ENCODE measurements at regions of chr12 and their contacts with region 1.

Region 1: DNA sequence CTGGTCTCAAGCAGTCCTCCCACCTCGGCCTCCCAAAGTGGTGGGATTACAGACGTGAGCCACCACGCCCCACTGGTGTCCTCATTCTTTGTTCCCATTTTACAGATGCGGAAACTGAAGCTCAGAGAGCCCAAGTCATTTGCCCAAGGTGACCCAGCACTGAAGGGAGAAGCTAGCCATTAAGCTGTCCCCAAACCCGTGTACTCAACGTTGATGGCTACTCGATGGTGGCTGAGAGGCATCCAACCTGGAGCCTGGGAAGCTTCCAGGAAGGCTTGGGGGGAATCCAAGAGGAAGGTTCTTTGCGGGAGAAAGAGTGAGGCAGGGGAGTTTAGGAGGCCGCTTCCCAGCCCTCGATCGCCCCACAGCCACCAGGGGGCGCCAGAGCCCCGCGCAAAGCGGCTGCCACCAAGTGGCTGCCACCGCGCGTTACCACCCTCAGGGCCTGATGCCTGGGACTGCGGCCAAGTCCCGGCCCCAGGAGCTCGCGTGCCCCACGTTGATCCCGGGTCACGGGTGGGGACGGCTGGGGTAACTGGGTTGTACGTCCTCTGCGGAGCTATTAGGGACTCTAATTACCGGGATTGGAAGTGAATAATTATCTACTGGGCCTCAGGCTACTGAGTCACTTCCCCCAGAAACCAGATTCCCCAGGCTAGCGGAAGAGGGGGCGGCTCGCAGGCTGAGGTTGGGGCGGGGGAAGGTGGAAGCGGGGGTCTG is 8.8 kb upstream of the SH2B3 start:
- DNase-seq: peak; percentile 96
- H3K4me3 ChIP-seq: no peak overlapping the region
- H3K27ac ChIP-seq: peak overlapping the region; percentile 81
- H3K4me1 ChIP-seq: peaks cover 27% of the 10 kb centered on the region
- H3K27me3 ChIP-seq: no peaks in the 10 kb centered on the region
- CTCF ChIP-seq: peak; percentile 99 to 100
- POLR2A ChIP-seq: peak; percentile 57

Region 2: GRCh38 chr12:111074559-111074958 is 322.3 kb before region 1 on chr12:
- CTCF ChIA-PET with region 1: no interaction called
- POLR2A ChIA-PET with region 1: no interaction called
- dilution Hi-C with region 1: no loop called
- intact Hi-C with region 1: no loop called
- DNase-seq: no peak
- H3K4me3 ChIP-seq: no peak overlapping the region
- H3K27ac ChIP-seq: no peak overlapping the region
- H3K4me1 ChIP-seq: no peaks in the 10 kb centered on the region
- H3K27me3 ChIP-seq: peaks cover 2 to 4% of the 10 kb centered on the region in 2 experiments
- CTCF ChIP-seq: no peak
- POLR2A ChIP-seq: no peak

Region 3: GRCh38 chr12:111368788-111369495 is 27.9 kb before region 1 on chr12 and contains the start of gene PHETA1:
- CTCF ChIA-PET with region 1: interaction called, 31 read pairs
- POLR2A ChIA-PET with region 1: no interaction called
- dilution Hi-C with region 1: no loop called
- intact Hi-C with region 1: loop called (anchors 2 kb)
- DNase-seq: peak; percentile 90
- H3K4me3 ChIP-seq: peak within 1 kb of the TSS; percentile 79 to 94 (median 87)
- H3K27ac ChIP-seq: peak within 1 kb of the TSS; percentile 57
- H3K4me1 ChIP-seq: peaks cover 21% of the 10 kb centered on the region
- H3K27me3 ChIP-seq: no peaks in the 10 kb centered on the region
- CTCF ChIP-seq: no peak
- POLR2A ChIP-seq: peak; percentile 72
- total RNA-seq, gene PHETA1: 12.9 and 20.0 TPM in 2 replicates

Region 4: DNA sequence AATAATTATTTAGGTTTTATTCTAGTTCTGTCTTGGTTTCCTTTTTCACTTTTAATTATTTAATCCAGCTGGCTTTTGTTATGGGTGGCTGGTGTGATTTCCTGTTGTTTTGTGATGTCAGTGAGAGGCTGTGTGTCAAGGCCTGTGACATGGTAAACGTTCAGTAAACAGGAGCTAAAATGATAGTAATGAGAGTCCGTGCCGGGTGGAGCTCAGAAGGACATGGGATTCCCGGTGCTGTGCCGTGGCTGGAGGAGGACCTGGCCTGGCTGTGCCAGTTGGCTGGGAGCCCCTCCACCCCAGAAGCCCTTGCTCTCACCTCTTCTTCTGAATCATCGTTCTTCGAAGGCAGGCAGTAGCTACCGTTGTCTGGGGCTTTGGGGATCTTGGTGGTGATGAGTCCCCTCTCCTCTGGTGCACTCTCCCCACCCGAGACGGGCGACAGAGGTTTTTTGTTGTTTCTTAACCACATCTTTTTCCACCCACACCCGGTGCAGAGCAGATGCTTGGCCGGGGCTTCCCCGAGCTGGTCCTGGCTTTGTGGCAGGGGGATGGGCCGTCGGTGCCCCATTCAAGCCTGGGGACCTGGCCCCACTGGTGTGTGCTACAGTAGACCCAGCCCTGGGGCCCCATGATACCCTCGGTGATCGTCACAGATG is 37.9 kb after region 1 on chr12:
- CTCF ChIA-PET with region 1: interaction called, 30 read pairs
- POLR2A ChIA-PET with region 1: no interaction called
- dilution Hi-C with region 1: no loop called
- intact Hi-C with region 1: no loop called
- DNase-seq: peak; percentile 83
- H3K4me3 ChIP-seq: peak overlapping the region in 1 of 3 experiments; percentile 27
- H3K27ac ChIP-seq: peak overlapping the region; percentile 85
- H3K4me1 ChIP-seq: peaks cover 90% of the 10 kb centered on the region
- H3K27me3 ChIP-seq: no peaks in the 10 kb centered on the region
- CTCF ChIP-seq: no peak
- POLR2A ChIP-seq: no peak

Region 5: GRCh38 chr12:111451649-111452129 is 54.8 kb after region 1 on chr12:
- CTCF ChIA-PET with region 1: interaction called, 464 read pairs
- POLR2A ChIA-PET with region 1: interaction called, 6 read pairs
- dilution Hi-C with region 1: no loop called
- intact Hi-C with region 1: loop called (anchors 1 kb)
- DNase-seq: peak; percentile 68
- H3K4me3 ChIP-seq: no peak overlapping the region
- H3K27ac ChIP-seq: no peak overlapping the region
- H3K4me1 ChIP-seq: peaks cover 19% of the 10 kb centered on the region
- H3K27me3 ChIP-seq: no peaks in the 10 kb centered on the region
- CTCF ChIP-seq: peak; percentile 60 to 66
- POLR2A ChIP-seq: no peak

Region 6: GRCh38 chr12:111488271-111488670 is 91.4 kb after region 1 on chr12:
- CTCF ChIA-PET with region 1: interaction called, 38 read pairs
- POLR2A ChIA-PET with region 1: interaction called, 4 read pairs
- dilution Hi-C with region 1: no loop called
- intact Hi-C with region 1: no loop called
- DNase-seq: no peak
- H3K4me3 ChIP-seq: no peak overlapping the region
- H3K27ac ChIP-seq: no peak overlapping the region
- H3K4me1 ChIP-seq: no peaks in the 10 kb centered on the region
- H3K27me3 ChIP-seq: no peaks in the 10 kb centered on the region
- CTCF ChIP-seq: no peak
- POLR2A ChIP-seq: no peak

Region 7: GRCh38 chr12:111673503-111673902 is 276.6 kb after region 1 on chr12:
- CTCF ChIA-PET with region 1: interaction called, 19 read pairs
- POLR2A ChIA-PET with region 1: no interaction called
- dilution Hi-C with region 1: no loop called
- intact Hi-C with region 1: loop called (anchors 1 kb)
- DNase-seq: peak; percentile 31
- H3K4me3 ChIP-seq: no peak overlapping the region
- H3K27ac ChIP-seq: no peak overlapping the region
- H3K4me1 ChIP-seq: no peaks in the 10 kb centered on the region
- H3K27me3 ChIP-seq: no peaks in the 10 kb centered on the region
- CTCF ChIP-seq: peak; percentile 19 to 37
- POLR2A ChIP-seq: no peak

Measured in endothelial cell of umbilical vein (primary cell).